Posterior vena cava (tissue), 2 donors: ENCODE measurements at regions of chr1 and their contacts with region 1.

Region 1: DNA sequence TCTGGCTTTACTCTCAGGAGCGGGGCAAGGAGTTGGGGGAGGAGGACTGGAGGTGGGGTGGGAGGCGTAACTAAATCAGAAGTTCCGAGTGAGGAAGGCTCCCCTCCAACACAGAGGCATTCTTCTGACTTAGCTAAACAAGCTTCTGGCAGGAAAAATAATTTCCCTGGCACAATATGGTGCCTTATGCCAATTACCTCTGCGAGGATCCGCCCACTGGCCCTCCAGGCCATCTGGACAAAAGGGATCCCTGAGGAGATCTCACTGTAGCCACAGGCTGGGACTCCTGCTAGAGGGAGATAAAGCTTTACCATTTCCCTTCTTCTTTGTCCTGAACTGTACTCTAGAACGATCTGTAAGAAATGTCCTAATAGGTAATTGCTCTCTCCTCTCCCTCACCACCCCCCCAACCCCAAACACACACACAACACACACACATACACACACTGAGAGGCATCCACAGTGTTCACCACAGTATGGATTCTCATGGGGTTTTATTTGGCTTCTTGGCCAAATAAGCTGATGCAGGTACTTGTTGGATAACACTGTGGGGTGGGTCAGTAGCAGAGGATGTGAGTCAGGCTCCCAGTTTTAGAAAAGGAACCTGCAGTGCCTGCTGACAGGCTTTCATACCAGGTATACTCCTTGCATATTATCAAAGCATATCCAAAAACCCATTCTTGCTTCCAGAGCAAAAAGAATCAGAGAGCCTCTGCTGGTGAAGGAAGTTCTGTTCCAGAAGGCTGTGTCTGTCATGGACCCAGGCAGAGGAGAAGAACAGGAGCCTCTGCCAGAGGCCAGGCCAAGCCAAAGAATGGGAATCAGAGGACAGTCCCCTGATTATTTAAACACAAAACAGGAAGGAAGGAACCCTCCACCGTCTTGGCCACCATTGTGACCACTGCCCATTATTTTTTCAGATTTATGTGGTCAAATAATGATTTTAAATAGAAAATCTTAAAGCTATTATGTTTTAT is 169.1 kb downstream of the C1orf21 start:
- DNase-seq: no peak

Region 2: DNA sequence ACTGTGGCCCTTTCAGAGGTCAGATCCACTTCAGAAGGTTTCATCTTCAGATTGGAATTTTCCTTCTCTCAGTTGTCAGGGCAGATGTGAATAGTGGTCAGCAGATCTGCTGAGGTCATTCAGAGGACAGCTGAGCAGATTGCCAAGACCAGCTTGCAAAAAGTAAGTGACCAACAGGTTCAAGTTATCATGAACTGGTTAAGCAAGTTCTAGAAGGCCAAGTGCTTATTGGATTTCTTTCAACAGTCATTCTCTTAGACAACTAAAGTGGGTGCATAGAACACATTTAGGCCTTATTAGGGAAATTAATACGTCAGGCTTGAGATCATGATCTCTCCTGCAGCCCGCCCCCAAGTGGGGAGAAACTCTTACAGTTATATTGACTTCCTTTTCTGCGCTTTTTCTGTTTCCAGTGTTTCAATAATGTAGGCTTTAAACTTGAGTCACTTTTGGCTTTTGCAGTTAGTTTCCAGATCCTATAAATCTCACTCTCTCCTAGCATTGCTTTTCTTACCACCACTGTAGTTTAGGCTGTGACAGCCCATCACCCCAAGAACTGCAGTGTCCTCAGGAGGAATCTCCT is 72.8 kb before region 1 on chr1:
- intact Hi-C with region 1: loop called in 1 of 2 experiments (anchors 10 kb)
- DNase-seq: no peak

Region 3: GRCh38 chr1:185112356-185112755 is 556.4 kb after region 1 on chr1:
- intact Hi-C with region 1: loop called in 1 of 2 experiments (anchors 5 kb)
- DNase-seq: no peak